ENCODE measurements at regions of chr4 and their contacts with region 1.

Region 1: GRCh38 chr4:121823505-121824170 is at the start of gene CCNA2:
- DNase-seq: peak; percentile 98
- H3K4me3 Mint-ChIP-seq: peak within 1 kb of the TSS; percentile 98
- H3K27ac Mint-ChIP-seq: peak within 1 kb of the TSS; percentile 96
- H3K4me1 Mint-ChIP-seq: peaks cover 40% of the 10 kb centered on the region
- H3K27me3 Mint-ChIP-seq: no peaks in the 10 kb centered on the region
- total RNA-seq, gene CCNA2: 104 to 107 TPM

Region 2: GRCh38 chr4:121696581-121697461 is 126.8 kb before region 1 on chr4 and contains the start of gene ANXA5:
- CTCF ChIA-PET with region 1: interaction called, 5 read pairs
- POLR2A ChIA-PET with region 1: interaction called, 26 read pairs
- DNase-seq: peak; percentile 87
- H3K4me3 Mint-ChIP-seq: peak within 1 kb of the TSS; percentile 99
- H3K27ac Mint-ChIP-seq: peak within 1 kb of the TSS; percentile 99
- H3K4me1 Mint-ChIP-seq: peaks cover 38% of the 10 kb centered on the region
- H3K27me3 Mint-ChIP-seq: peaks cover 31% of the 10 kb centered on the region
- total RNA-seq, gene ANXA5: 234 to 235 TPM

Region 3: DNA sequence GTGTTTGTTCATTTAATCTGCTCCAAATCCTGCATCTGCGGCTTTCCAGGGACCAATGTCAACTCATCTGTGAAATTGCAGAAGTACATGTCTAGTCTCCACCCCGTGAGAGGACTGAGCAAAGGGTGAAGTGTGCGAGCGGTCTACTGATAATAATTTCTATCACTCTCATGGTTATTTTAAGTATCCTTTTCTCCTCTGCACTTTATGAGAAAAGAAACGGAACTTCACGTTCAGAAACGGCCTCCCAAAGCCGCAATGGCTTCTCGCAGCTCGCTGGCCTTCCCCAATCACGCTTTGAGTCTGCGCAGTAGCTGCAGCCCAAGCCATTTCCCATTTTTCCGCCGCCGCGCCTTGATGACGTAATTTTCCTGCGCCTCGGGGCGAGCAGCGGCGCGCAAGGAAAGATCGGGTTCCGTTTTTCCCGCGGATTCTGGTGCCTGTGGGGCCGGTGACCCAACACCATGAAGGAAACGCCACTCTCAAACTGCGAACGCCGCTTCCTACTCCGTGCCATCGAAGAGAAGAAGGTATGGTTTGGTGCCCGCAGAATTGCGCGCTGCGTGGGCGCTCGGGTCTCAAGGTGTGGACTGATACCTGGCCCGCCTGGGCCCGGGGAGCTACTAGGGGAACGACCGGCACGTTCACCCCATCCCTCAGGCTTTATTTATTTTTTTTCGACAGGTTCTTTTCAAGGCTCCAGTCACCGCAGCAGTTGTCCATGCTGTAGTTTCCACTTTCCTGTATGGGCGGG is 22.5 kb before region 1 on chr4 and contains the start of gene EXOSC9:
- CTCF ChIA-PET with region 1: interaction called, 3 read pairs
- POLR2A ChIA-PET with region 1: interaction called, 142 read pairs
- DNase-seq: peak; percentile 92
- H3K4me3 Mint-ChIP-seq: peak within 1 kb of the TSS; percentile 84
- H3K27ac Mint-ChIP-seq: peak within 1 kb of the TSS; percentile 95
- H3K4me1 Mint-ChIP-seq: peaks cover 50% of the 10 kb centered on the region
- H3K27me3 Mint-ChIP-seq: no peaks in the 10 kb centered on the region
- total RNA-seq, gene EXOSC9: 50.5 to 51.0 TPM

Region 4: GRCh38 chr4:121811122-121811521 is 12.5 kb before region 1 on chr4:
- CTCF ChIA-PET with region 1: interaction called, 3 read pairs
- POLR2A ChIA-PET with region 1: interaction called, 37 read pairs
- DNase-seq: no peak
- H3K4me3 Mint-ChIP-seq: no peak overlapping the region
- H3K27ac Mint-ChIP-seq: peak overlapping the region; percentile 66
- H3K4me1 Mint-ChIP-seq: peaks cover 39% of the 10 kb centered on the region
- H3K27me3 Mint-ChIP-seq: no peaks in the 10 kb centered on the region

Region 5: GRCh38 chr4:121869841-121870656 is 46.4 kb after region 1 on chr4 and contains the start of gene BBS7:
- CTCF ChIA-PET with region 1: interaction called, 3 read pairs
- POLR2A ChIA-PET with region 1: interaction called, 24 read pairs
- DNase-seq: peak; percentile 96
- H3K4me3 Mint-ChIP-seq: peak within 1 kb of the TSS; percentile 94
- H3K27ac Mint-ChIP-seq: peak within 1 kb of the TSS; percentile 80
- H3K4me1 Mint-ChIP-seq: peaks cover 19% of the 10 kb centered on the region
- H3K27me3 Mint-ChIP-seq: peaks cover 9% of the 10 kb centered on the region
- total RNA-seq, gene BBS7: 16.2 to 16.9 TPM

Region 6: DNA sequence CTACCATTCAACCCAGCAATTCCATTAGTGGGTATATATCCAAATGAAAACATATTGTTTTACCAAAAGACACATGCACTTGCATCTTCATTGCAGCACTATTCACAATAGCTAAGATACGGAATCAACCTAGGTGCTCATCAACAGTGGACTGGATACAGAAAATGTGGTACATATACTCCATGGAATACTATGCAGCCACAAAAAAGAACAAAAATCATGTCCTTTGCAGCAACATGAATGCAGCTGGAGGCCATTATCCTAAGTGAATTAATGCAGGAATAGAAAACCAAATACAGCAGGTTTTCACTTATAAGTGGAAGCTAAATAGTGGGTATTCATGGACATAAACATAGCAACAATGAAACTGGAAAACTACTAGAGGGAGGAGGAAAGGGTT is 84.7 kb after region 1 on chr4:
- CTCF ChIA-PET with region 1: no interaction called
- POLR2A ChIA-PET with region 1: no interaction called
- DNase-seq: no peak
- H3K4me3 Mint-ChIP-seq: no peak overlapping the region
- H3K27ac Mint-ChIP-seq: no peak overlapping the region
- H3K4me1 Mint-ChIP-seq: no peaks in the 10 kb centered on the region
- H3K27me3 Mint-ChIP-seq: no peaks in the 10 kb centered on the region